ENCODE measurements at regions of chr9 and their contacts with region 1.

Region 1: DNA sequence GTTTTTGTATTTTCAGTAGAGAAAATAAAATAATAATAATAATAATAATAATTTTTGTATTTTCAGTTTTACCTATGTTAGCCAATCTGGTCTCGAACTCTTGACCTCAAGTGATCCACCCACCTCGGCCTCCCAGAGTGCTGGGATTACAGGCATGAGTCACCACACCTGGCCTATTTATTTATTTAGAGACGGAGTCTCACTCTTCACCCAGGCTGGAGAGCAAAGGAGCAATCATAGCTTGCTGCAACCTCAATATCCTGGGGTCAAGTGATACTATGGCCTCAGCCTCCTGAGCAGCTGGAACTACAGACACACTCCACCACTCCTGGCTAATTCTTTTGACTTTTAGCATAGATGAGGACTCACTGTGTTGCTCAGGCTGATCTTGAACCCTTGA is 167.5 kb downstream of the TLE1 start:
- DNase-seq: no peak
- ATAC-seq: no peak
- H3K4me3 ChIP-seq: no peak overlapping the region
- H3K27ac ChIP-seq: no peak overlapping the region
- H3K4me1 ChIP-seq: peaks cover 0 to 7% (median 0%) of the 10 kb centered on the region in 12 donors
- H3K27me3 ChIP-seq: no peaks in the 10 kb centered on the region
- CTCF ChIP-seq: no peak
- POLR2A ChIP-seq: no peak

Region 2: DNA sequence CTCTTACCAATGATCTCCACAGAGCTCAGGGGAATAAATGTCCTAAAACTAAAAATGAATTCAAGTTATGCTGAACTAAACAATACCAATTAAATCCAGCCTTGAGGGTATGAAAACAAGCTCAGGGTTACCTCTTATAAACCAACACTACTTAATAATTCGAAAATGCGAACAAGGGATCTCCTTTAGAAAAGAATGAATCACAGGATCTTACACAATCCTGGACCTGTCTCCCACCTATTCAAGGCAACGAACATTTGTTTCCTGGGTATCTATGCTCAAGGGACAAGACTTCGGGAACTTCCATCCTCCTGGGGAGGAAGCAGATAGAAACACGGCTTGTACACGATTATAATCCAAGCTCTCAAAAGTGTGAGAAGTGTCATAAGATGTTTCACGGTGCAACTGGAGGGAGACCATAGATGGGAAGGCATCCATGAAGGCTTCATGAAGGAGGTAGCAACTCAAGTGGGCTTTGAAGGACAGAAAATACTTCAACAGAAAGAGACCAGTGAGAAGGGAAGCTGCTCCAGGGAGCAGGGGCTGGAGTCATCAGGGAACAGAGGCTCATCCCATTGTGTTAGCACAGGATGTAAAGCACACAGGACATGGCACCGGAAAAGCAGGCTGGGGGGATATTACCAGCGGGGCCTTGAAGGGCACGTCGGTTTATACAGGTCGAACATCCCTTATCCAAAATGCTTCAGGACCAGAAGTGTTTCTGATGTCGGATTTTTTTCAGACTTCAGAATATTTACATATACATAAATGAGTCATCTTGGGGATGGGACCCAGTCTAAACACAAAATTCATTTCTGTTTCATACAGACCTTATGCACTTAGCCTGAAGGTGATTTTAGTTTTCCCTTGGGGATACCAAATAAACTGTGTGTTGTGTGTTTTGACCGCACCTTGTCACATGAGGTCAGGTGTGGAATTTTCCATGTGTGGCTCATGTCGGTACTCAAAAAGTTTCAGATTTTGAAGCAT is 80.0 kb after region 1 on chr9:
- intact Hi-C with region 1: loop called in 1 of 10 experiments (anchors 5 kb)
- DNase-seq: no peak
- ATAC-seq: peak in 1 of 4 donors; percentile 42
- H3K4me3 ChIP-seq: no peak overlapping the region
- H3K27ac ChIP-seq: peak overlapping the region in 10 of 12 donors; percentile 2 to 42 (median 24)
- H3K4me1 ChIP-seq: peaks cover 0 to 50% (median 14%) of the 10 kb centered on the region in 12 donors
- H3K27me3 ChIP-seq: no peaks in the 10 kb centered on the region
- CTCF ChIP-seq: no peak
- POLR2A ChIP-seq: no peak

Region 3: DNA sequence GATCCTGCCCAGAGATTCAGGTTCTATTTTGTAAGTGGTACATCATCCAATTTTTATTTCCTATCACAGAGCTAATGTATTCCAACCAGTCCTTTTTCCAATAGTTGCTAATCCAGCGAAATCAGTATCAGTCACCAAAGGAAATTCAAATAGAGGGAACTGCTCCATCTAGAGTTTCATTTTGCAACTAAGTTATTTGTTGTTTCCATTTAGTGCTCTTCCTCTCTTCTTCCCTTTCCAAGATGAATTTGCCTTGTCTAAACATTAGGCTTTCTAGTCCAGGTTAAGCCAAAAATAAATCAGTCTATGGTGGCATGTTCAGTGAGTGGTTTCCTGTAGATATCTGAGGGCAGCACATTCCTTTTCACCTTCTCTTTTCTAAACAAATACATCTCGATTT is 326.6 kb after region 1 on chr9:
- intact Hi-C with region 1: loop called in 5 of 10 experiments (anchors 5 to 10 kb)
- DNase-seq: no peak
- ATAC-seq: no peak
- H3K4me3 ChIP-seq: no peak overlapping the region
- H3K27ac ChIP-seq: no peak overlapping the region
- H3K4me1 ChIP-seq: peaks cover 0 to 16% (median 9%) of the 10 kb centered on the region in 12 donors
- H3K27me3 ChIP-seq: peaks cover 0 to 4% (median 0%) of the 10 kb centered on the region in 9 donors
- CTCF ChIP-seq: peak in 11 of 12 donors; percentile 17 to 60 (median 32)
- POLR2A ChIP-seq: no peak

Region 4: DNA sequence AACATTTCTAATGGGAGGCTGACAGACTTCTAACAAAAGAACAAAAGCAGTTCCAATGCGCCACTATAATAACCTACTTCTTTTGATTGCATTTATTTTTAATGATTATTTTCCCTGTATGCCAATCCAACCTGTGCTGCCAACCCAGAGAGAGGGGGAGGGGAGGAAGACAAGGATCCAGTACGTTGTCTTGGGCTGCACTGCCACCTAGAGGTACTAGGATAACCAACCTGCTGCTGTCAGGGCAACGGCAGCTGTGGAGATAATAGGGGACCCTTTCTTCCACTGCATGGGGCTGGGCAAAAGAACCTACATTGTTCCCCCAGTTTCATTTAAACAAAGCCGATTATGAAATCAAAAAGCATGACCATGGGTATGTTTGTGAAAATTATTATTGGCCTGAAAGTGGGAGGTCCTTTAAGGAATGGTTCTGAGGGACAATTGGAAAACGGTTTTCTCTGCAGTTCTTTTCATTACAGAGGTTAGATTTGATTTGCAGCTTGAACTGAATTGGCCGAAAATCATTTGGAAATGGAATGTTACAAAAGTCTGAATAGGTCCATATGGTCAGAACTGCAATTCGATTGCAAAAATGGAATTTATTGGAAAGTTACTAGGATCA is 1439.7 kb after region 1 on chr9:
- intact Hi-C with region 1: loop called in 1 of 10 experiments (anchors 5 kb)
- DNase-seq: peak in 4 of 5 donors; percentile 56 to 77 (median 62)
- ATAC-seq: peak in 3 of 4 donors; percentile 85 to 92 (median 89)
- H3K4me3 ChIP-seq: no peak overlapping the region
- H3K27ac ChIP-seq: no peak overlapping the region
- H3K4me1 ChIP-seq: peaks cover 0 to 5% (median 0%) of the 10 kb centered on the region in 12 donors
- H3K27me3 ChIP-seq: peaks cover 0 to 4% (median 0%) of the 10 kb centered on the region in 9 donors
- CTCF ChIP-seq: peak; percentile 61 to 85 (median 72)
- POLR2A ChIP-seq: no peak